Heart left ventricle (tissue), 16 donors: ENCODE measurements at regions of chr7 and their contacts with region 1.

Region 1: DNA sequence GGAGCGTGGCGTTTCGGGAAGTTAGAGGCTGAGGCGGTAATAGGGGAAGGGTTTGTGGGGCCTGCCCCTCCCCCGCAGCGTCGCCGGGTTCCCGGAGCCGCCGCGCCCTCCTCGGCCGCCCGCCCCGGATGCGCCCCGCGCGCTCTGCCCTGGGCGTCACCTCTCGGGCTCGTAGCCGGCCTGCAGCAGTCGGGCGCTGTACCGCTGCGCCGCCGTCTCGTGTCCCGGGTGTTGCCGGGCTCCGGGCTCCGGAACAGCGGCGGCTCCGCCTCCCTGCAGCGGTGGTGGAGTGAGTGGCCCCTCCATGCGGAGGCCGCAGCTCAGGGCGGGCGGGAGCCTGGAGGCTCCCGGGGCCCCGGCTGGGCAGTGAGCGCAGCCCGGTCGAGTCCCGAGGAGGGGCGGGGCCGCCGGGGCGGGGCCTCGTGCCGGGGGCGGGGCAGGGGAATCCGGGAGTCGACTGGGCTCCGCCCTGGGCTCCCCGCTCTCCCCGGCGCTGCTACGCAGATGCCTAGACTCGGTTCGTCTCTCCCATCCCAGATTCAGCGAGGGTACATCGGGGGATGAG is at the start of gene IMPDH1:
- DNase-seq: peak; percentile 89 to 96 (median 91)
- ATAC-seq: peak; percentile 71 to 94 (median 92)
- H3K4me3 ChIP-seq: peak within 1 kb of the TSS; percentile 48 to 87 (median 71)
- H3K27ac ChIP-seq: peak within 1 kb of the TSS; percentile 21 to 94 (median 82)
- H3K4me1 ChIP-seq: peaks cover 0 to 53% (median 38%) of the 10 kb centered on the region in 12 donors
- H3K27me3 ChIP-seq: no peaks in the 10 kb centered on the region
- CTCF ChIP-seq: peak in 1 of 12 donors; percentile 5
- POLR2A ChIP-seq: peak in 1 of 2 donors; percentile 78
- total RNA-seq, gene IMPDH1: 12.3 to 65.3 (median 25.7) TPM

Region 2: DNA sequence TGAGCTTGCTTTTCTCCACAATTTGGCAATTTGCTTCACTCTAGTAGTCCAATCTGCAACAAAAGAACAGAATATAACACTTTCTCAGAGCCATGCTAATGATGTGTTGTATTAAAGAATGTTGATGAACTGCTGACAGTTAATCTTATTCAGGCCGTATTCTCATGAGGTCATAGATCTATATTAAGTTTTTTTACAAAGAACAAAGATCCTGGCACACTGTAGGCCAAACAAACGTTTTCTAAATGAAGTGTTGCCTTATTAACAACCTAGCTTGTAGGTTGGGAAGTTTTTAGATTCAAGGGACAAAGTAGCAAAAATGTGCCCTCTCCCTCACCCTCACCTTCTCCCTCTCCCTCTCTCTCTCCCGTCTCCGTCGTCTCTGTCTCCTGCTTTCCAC is 52.8 kb after region 1 on chr7:
- intact Hi-C with region 1: loop called in 2 of 10 experiments (anchors 10 kb)
- DNase-seq: no peak
- ATAC-seq: peak in 2 of 4 donors; percentile 32 to 60
- H3K4me3 ChIP-seq: no peak overlapping the region
- H3K27ac ChIP-seq: peak overlapping the region in 6 of 12 donors; percentile 24 to 53 (median 28)
- H3K4me1 ChIP-seq: peaks cover 0 to 16% (median 8%) of the 10 kb centered on the region in 12 donors
- H3K27me3 ChIP-seq: no peaks in the 10 kb centered on the region
- CTCF ChIP-seq: no peak
- POLR2A ChIP-seq: no peak